ENCODE measurements at regions of chr16 and their contacts with region 1.

Region 1: DNA sequence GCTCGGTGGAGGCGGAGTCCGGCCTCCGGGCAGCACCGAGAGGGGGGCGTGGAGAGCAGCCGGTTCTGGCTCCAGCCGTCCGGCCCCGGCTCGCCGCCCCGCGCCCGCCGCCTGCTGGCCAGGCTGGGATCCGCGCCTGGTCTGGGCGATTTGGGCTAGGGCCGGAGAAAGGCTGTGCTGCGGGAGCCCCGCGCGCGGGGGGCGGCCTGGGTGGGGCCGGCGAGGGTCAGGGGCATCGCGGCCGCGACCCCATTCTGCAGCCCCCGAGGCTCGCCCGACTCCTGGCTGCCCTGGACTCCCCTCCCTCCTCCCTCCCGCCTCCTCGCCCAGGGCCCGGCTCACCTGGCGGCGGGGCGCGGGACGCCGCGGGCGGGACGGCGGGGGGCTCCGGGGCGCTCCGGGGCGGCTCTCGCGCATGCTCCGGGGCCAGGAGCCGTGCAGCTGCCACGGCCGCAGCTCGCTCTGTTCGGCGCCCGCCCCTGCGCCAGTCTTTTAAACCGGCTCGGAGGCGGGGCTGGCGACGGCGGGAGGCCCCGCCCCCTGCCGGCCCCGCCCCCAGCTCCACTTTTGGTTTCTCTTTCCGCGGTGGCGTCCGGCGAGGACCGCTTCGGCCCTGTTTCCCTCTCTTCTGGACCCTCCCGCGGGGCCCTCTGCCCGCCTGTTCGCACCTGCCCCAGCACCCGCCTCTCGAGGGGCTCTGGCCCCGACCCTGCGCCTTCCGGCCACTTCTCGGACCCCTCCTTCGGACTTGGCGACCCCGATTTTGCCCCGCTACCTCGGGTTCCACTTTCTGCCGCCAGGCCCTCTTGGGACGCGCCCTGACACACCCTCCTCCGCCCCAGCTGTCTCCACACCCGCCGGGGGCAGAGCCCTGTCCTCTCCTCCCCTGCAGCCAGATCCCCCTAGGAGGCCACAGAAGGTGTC is at the start of gene SOCS1:
- DNase-seq: peak; percentile 72 to 75
- ATAC-seq: peak; percentile 80
- H3K4me3 ChIP-seq: peak within 1 kb of the TSS; percentile 70 to 94 (median 84)
- H3K27ac ChIP-seq: peak within 1 kb of the TSS; percentile 94 to 99 (median 96)
- H3K4me1 ChIP-seq: peaks cover 15 to 16% of the 10 kb centered on the region in 2 donors
- H3K27me3 ChIP-seq: no peaks in the 10 kb centered on the region
- CTCF ChIP-seq: peak; percentile 68 to 99 (median 99)
- POLR2A ChIP-seq: peak; percentile 98 to 100
- total RNA-seq, gene SOCS1: 1.1 to 5.5 (median 3.1) TPM

Region 2: DNA sequence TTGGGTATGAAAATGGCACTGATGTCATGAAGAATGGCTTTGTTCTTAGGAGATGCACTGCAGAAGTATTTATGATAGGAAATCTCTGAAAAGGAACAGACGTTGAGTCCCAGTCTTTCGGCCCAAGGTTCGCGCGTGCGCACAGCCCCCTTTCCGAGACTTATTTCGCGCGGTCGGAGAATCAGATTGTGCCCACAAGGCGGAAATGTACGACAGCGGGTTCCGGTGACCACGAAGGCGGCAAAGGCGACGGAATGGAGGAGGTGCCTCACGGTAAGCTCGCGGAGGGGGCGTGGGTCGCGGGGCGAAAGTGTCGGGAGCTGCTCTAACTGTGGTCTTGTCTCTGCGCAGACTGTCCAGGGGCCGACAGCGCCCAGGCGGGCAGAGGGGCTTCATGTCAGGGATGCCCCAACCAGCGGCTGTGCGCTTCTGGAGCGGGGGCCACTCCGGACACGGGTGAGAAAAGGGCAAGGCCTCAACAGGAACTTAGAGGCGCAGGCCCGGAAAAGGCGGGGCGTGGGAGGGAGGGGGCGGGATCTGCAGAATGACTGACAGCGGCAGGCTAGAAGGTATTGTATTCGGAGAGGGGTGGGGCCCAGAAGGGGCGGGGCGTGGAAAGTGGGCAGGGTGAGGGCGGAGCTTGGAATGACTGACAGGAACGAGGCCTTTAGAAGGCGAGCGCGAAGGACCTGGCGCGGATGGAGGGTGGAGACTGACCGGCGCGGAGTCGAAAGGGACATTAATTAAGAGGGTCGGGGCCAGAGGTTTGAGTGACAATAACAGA is 512.2 kb before region 1 on chr16 and contains the start of gene NUBP1:
- in situ Hi-C with region 1: no loop called
- intact Hi-C with region 1: loop called (anchors 10 kb)
- DNase-seq: peak; percentile 98 to 100
- ATAC-seq: peak; percentile 96 to 97
- H3K4me3 ChIP-seq: peak within 1 kb of the TSS; percentile 64 to 76 (median 71)
- H3K27ac ChIP-seq: peak within 1 kb of the TSS; percentile 94 to 98 (median 96)
- H3K4me1 ChIP-seq: peaks cover 23 to 26% of the 10 kb centered on the region in 2 donors
- H3K27me3 ChIP-seq: no peaks in the 10 kb centered on the region
- CTCF ChIP-seq: no peak
- POLR2A ChIP-seq: peak; percentile 76 to 90
- total RNA-seq, gene NUBP1: 19.2 to 38.5 (median 26.9) TPM

Region 3: DNA sequence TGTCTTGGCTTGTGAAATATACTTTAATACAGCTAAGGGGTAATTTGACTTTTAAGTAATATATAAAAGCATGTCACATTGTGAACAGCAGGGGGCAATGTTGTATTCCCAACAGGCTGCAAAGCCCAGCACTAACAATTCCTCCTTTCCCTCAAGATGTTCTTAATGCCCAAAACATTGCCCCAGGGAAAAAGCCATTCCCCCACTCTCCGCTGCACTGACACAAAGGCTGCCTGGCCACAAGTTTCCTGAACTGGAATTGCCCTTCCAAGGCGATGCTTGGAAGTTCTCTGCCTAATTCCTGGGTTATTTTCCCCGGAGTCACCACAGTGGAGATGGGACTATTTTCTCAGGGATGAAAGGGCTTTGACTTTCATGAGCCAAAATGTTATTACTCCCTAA is 284.4 kb before region 1 on chr16:
- in situ Hi-C with region 1: loop called (anchors 5 to 10 kb)
- intact Hi-C with region 1: loop called (anchors 1 kb)
- DNase-seq: peak; percentile 40 to 47
- ATAC-seq: peak; percentile 68 to 82
- H3K4me3 ChIP-seq: no peak overlapping the region
- H3K27ac ChIP-seq: peak overlapping the region in 1 of 4 donors; percentile 9
- H3K4me1 ChIP-seq: no peaks in the 10 kb centered on the region
- H3K27me3 ChIP-seq: no peaks in the 10 kb centered on the region
- CTCF ChIP-seq: peak; percentile 61 to 84 (median 81)
- POLR2A ChIP-seq: no peak

Region 4: GRCh38 chr16:11105038-11105903 is 150.7 kb before region 1 on chr16:
- in situ Hi-C with region 1: no loop called
- intact Hi-C with region 1: loop called (anchors 2 kb)
- DNase-seq: peak; percentile 57 to 84
- ATAC-seq: peak; percentile 89 to 96
- H3K4me3 ChIP-seq: no peak overlapping the region
- H3K27ac ChIP-seq: peak overlapping the region; percentile 12 to 65 (median 48)
- H3K4me1 ChIP-seq: peaks cover 16 to 31% of the 10 kb centered on the region in 2 donors
- H3K27me3 ChIP-seq: no peaks in the 10 kb centered on the region
- CTCF ChIP-seq: peak in 1 of 5 experiments; percentile 13
- POLR2A ChIP-seq: no peak

Region 5: GRCh38 chr16:11133344-11133943 is 122.6 kb before region 1 on chr16:
- in situ Hi-C with region 1: no loop called
- intact Hi-C with region 1: loop called (anchors 2 kb)
- DNase-seq: peak; percentile 85 to 86
- ATAC-seq: peak; percentile 49 to 64
- H3K4me3 ChIP-seq: no peak overlapping the region
- H3K27ac ChIP-seq: peak overlapping the region; percentile 86 to 90 (median 90)
- H3K4me1 ChIP-seq: peaks cover 58 to 71% of the 10 kb centered on the region in 2 donors
- H3K27me3 ChIP-seq: no peaks in the 10 kb centered on the region
- CTCF ChIP-seq: no peak
- POLR2A ChIP-seq: no peak

Region 6: GRCh38 chr16:11224096-11224893 is 31.7 kb before region 1 on chr16:
- in situ Hi-C with region 1: no loop called
- intact Hi-C with region 1: loop called (anchors 2 kb)
- DNase-seq: peak; percentile 93
- ATAC-seq: peak; percentile 96 to 98
- H3K4me3 ChIP-seq: no peak overlapping the region
- H3K27ac ChIP-seq: peak overlapping the region; percentile 55 to 82 (median 78)
- H3K4me1 ChIP-seq: peaks cover 15 to 24% of the 10 kb centered on the region in 2 donors
- H3K27me3 ChIP-seq: no peaks in the 10 kb centered on the region
- CTCF ChIP-seq: no peak
- POLR2A ChIP-seq: peak; percentile 34 to 45

Region 7: DNA sequence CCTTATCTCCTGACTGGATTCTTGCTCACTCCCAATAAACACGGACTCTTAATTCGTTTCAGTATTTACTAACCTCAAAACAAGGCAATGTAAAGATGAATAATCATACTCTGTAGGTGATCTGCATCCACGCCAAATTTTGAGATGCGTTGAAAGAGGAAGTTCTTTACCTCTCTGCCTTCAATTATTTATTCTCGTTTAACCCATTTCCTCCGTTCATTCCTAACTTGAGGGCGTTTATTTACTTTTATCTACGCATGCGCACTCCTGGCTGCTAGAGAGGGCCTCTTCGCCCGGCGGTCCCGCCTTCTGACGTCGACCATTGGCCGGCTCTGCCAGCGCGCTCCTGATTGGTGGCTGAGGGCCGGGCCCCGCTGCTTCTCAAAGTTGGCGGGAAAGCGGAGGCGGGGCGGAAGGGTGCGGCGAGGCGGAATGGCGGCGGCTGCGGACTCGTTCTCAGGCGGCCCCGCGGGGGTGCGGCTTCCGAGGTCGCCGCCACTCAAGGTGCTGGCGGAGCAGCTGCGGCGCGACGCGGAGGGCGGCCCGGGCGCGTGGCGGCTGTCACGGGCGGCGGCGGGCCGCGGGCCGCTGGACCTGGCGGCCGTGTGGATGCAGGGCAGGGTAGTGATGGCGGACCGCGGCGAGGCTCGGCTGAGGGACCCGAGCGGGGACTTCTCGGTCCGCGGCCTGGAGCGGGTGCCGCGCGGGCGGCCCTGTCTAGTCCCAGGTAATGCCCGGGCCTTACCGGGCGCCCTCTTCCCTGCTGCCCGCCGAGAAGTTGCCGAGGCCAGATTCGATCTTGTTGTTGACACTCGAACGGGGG is 89.3 kb after region 1 on chr16 and contains the start of gene RMI2:
- in situ Hi-C with region 1: no loop called
- intact Hi-C with region 1: loop called (anchors 2 kb)
- DNase-seq: peak; percentile 94 to 95
- ATAC-seq: peak; percentile 96 to 98
- H3K4me3 ChIP-seq: peak within 1 kb of the TSS; percentile 48 to 64 (median 56)
- H3K27ac ChIP-seq: peak within 1 kb of the TSS in 2 of 4 donors; percentile 36 to 37
- H3K4me1 ChIP-seq: peaks cover 0 to 5% of the 10 kb centered on the region in 2 donors
- H3K27me3 ChIP-seq: no peaks in the 10 kb centered on the region
- CTCF ChIP-seq: no peak
- POLR2A ChIP-seq: no peak
- total RNA-seq, gene RMI2: 0.44 to 0.49 TPM in 2 of 4 donors, not detected in the others

Measured in gastrocnemius medialis (tissue), 4 donors.